ENCODE measurements at regions of chr5 and their contacts with region 1.

Region 1: GRCh38 chr5:127040796-127041520 is 10.6 kb upstream of the MARCHF3 start:
- DNase-seq: no peak
- ATAC-seq: peak; percentile 45 to 93

Region 2: GRCh38 chr5:126100767-126101166 is 940.2 kb before region 1 on chr5:
- intact Hi-C with region 1: no loop called
- DNase-seq: no peak
- ATAC-seq: no peak

Region 3: DNA sequence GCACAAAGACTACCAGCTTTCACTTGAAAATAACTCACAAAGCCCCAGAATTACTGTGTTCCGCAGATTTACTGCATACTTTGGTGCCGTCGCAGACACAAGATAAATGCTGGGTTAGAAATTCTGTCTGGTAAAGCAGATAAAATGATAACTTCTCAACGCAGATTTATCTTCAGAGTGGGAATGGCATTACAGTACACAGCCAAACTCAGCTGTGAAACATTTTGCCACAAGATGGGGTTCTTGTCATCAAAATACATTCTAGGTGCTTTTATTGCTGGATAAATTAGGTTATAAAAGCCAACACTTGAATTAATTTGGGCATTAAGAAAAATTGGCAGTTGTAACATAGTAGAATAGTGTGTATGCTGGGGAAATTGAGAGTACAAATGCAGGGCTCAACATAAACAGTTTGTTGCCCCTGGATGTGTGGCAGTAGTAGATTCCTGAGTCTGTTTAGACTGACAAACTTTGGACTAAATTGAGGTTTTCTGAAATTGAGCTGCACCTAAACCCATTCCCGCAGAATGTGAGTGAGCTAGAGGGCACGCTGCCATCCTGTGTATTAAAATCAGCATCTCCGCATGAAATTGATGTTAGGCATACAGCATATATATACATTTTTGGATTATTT is 202.9 kb before region 1 on chr5:
- intact Hi-C with region 1: loop called in 1 of 2 experiments (anchors 10 kb)
- DNase-seq: no peak
- ATAC-seq: peak; percentile 67 to 74

Region 4: DNA sequence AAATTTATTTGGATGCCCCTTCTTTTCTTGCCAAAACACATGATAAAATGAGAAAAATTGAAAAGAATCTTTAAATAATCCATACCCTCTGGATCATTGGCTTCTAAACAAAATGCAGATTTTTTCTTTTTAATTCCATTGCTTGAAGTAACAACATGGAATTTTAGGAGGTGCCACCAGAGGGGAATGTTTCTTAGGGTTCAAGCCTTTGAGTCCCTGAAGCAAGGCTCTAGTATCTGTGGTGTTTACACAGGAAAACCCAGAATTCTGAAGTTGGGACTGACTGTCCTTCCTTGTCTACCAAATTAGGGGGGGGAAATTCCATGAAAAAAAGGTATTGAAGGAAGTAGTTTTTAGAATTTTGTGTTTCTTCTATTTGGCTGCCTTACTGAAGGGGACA is 194.6 kb before region 1 on chr5:
- intact Hi-C with region 1: loop called in 1 of 2 experiments (anchors 5 kb)
- DNase-seq: no peak
- ATAC-seq: no peak

Region 5: GRCh38 chr5:127072861-127073846 is 32.2 kb after region 1 on chr5 and contains the start of gene C5orf63:
- intact Hi-C with region 1: loop called in 1 of 2 experiments (anchors 5 kb)
- DNase-seq: peak; percentile 69
- ATAC-seq: peak; percentile 93 to 96
- total RNA-seq, gene C5orf63: 5.9 to 7.8 TPM

Region 6: GRCh38 chr5:127229185-127229889 is 188.4 kb after region 1 on chr5:
- intact Hi-C with region 1: no loop called
- DNase-seq: peak; percentile 72
- ATAC-seq: peak; percentile 94

Measured in left cardiac atrium (tissue), 4 donors.